AG04449 (cell line): ENCODE measurements at regions of chr1 and their contacts with region 1.

Region 1: DNA sequence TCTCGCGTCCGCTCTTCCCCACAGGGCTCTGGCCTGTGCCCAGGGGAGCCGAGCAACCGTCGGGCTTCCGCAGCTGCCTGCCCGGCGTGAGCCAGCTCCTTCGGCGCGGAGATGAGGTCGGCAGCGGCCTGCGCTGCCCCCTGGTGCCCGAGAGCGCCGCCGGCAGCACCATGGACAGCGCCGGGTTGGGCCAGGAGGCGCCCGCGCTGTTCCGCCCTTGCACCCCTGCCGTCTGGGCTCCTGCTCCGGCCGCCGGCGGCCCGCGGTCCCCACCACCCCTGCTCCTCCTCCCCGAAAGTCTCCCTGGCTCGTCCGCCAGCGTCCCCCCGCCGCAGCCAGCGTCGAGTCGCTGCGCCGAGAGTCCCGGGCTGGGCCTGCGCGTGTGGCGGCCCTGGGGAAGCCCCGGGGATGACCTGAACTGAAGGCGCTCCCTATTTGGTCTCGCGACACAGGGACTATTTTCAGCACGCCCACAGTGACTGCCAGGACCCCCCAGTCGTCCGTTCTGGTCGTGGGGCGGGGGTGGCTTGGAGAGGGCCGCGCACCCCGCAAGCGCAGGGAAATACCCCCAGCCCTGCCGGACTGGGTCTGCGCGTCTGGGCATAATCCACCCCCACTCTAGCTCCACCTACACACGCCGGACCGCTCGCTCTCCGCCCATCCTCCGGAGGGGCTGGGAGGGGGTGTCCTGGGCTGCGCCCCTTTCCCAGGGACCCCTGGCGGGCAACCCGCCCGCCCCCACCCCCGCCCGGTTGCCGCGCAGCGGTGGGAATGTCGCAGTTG is 1.3 kb downstream of the HES3 start:
- DNase-seq: no peak
- H3K4me3 ChIP-seq: peak overlapping the region; percentile 27
- CTCF ChIP-seq: peak; percentile 99

Region 2: GRCh38 chr1:6094801-6095505 is 150.3 kb before region 1 on chr1:
- CTCF ChIA-PET with region 1: no interaction called
- POLR2A ChIA-PET with region 1: no interaction called
- DNase-seq: no peak
- H3K4me3 ChIP-seq: no peak overlapping the region
- CTCF ChIP-seq: no peak

Region 3: DNA sequence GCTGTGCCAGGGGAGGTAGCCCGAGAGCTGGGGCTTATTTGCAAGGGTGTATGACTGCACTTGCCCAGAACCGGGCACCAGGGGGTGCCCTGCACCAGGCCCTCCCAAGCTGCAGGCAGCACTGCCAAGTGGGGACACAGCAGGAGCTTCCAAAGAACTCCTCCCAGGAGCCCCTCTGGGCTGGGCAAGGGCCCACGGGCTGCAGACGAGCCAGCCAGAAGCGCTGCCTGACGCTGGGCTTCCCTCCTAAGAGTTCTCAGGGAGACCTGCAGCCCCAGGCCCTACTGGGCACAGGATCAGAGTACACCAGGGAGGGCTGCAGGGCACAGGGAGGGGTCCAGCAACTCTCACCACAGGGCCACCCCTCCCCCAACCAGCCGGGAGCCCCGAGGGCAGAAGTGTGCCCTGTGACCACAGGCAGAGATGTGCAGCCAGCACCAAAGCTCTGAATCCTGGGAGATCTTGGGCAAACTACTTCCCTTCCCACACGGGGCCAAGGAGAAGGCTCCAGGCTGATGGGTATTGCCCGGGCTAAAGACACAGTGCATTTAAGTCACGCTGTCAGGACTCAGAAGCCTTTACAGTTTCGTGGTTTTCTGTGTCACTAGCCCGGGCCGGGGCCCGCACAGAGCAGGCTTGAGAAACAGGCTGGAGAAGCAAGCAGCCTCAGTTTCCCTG is 136.2 kb before region 1 on chr1:
- CTCF ChIA-PET with region 1: interaction called, 12 read pairs
- POLR2A ChIA-PET with region 1: no interaction called
- DNase-seq: no peak
- H3K4me3 ChIP-seq: no peak overlapping the region
- CTCF ChIP-seq: peak; percentile 52

Region 4: GRCh38 chr1:6275826-6276782 is 30.8 kb after region 1 on chr1:
- CTCF ChIA-PET with region 1: interaction called, 54 read pairs
- POLR2A ChIA-PET with region 1: interaction called, 3 read pairs
- DNase-seq: peak; percentile 24
- H3K4me3 ChIP-seq: peak overlapping the region; percentile 40
- CTCF ChIP-seq: no peak

Region 5: DNA sequence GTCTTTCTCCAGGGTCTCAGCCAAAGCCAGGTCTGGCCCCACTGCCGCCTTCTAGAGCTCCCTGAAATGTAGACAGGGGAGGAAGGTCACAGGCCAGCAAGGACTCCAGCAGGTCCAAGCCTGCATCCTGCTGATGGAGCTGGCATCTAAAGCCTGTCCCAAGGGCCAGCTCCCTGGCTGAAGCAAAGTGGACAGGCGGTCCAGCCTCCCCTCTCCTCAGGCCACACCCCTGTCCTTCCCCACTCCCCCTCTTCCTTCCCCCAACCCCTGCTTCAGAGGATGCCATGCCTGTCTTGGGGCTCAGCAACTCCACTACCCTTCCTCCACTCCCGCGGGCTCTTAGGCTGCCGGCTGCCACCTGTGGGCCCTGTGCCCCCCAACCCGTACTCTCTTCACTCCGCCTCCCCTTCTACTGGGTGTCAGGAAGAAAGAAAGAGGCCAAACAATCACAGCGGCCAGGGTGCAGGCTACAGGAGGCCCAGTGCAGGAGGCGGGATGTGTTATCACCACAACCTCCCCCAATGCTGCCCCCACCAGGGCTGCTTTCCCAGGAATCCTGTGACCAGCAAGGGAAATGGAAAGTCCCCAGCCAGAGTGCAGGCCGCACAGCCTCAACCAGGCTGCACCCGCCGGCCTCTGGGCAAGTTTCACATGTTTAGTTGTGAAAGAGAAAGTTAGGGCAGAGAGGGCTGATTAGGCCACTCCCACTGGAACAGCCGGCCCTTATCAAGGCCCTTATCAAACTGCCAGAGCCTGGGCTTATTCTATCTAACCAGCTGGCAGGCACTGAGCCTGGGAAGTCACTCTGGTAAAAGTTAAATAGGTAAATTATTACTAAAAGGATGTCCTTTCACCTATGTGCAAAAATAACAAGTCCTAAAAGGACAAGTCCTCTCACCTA is 114.2 kb after region 1 on chr1:
- CTCF ChIA-PET with region 1: interaction called, 57 read pairs
- POLR2A ChIA-PET with region 1: no interaction called
- DNase-seq: no peak
- H3K4me3 ChIP-seq: no peak overlapping the region
- CTCF ChIP-seq: no peak

Region 6: GRCh38 chr1:6414443-6414844 is 169.2 kb after region 1 on chr1:
- CTCF ChIA-PET with region 1: interaction called, 10 read pairs
- POLR2A ChIA-PET with region 1: no interaction called
- DNase-seq: no peak
- H3K4me3 ChIP-seq: peak overlapping the region; percentile 27; the same call in 1 of the 2 replicates
- CTCF ChIP-seq: peak; percentile 73